ENCODE measurements at regions of chr10 and their contacts with region 1.

Region 1: GRCh38 chr10:30348378-30348776 is 701 bp downstream of the MTPAP start:
- DNase-seq: no peak
- H3K4me3 Mint-ChIP-seq: peak overlapping the region; percentile 96
- H3K27ac Mint-ChIP-seq: peak overlapping the region; percentile 95
- H3K4me1 Mint-ChIP-seq: peaks cover 41% of the 10 kb centered on the region
- H3K27me3 Mint-ChIP-seq: no peaks in the 10 kb centered on the region

Region 2: DNA sequence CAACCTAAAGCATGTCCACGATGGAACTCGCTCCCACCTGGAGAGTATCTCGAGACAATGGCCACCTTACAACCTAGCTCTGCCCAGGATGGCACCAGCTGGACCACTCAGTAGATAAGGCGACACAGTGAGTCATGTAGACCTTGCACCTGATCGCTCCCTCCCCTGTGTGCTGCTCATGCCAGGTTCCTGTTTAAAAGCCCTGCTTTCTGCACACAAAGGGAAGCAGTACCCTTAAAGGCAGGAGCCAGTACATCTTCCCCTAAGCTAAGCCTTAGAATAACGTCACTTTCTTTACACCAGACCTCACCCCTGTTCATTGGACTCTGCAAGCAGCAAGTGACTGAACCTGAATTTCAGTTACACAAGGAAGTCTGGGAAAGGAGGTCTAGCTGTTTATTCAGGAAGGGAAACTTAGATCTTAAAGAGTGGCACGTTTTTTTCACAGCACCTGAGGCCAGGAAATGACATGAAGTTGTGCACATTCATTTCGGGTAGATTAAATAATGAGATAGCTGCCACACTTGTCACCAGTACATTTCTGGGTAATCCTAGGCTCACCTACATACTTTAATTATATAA is 117.2 kb before region 1 on chr10:
- CTCF ChIA-PET with region 1: no interaction called
- intact Hi-C with region 1: no loop called
- DNase-seq: peak; percentile 33
- H3K4me3 Mint-ChIP-seq: no peak overlapping the region
- H3K27ac Mint-ChIP-seq: peak overlapping the region; percentile 32
- H3K4me1 Mint-ChIP-seq: peaks cover 13% of the 10 kb centered on the region
- H3K27me3 Mint-ChIP-seq: peaks cover 5% of the 10 kb centered on the region

Region 3: DNA sequence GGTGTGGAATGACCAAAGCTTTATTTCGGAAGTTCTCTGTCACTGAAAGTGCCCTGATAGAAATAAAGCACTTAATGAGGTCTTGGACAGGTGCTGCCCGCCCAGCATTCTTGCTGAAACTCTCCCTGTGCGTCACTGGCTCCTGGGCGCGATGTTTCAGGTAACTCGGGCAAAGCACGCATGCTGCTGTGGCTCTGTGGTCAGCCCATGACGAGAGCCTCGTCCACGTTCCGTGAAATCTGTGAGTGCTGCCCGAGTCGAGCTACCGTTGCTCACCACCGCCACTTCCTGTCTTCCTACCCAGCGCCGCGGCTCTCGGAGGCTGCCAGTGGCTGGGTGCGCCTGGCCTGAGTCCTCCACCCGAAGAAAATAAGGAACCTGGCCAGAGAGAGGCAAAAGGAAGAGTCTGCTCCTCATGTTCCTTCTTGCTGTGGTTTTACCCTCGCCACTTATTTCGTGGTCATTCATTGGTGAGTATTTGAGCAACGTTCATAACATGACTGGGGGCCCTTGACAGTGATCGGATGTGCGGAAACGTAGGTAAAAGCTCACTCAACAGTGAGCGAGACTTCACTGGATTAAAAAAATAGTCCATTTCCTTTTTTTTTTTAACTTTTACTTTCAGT is 181.1 kb after region 1 on chr10:
- CTCF ChIA-PET with region 1: interaction called, 3 read pairs
- intact Hi-C with region 1: loop called (anchors 2 kb)
- DNase-seq: peak; percentile 88
- H3K4me3 Mint-ChIP-seq: peak overlapping the region; percentile 73
- H3K27ac Mint-ChIP-seq: peak overlapping the region; percentile 85
- H3K4me1 Mint-ChIP-seq: peaks cover 52% of the 10 kb centered on the region
- H3K27me3 Mint-ChIP-seq: no peaks in the 10 kb centered on the region